ENCODE measurements at regions of chr4 and their contacts with region 1.

Region 1: DNA sequence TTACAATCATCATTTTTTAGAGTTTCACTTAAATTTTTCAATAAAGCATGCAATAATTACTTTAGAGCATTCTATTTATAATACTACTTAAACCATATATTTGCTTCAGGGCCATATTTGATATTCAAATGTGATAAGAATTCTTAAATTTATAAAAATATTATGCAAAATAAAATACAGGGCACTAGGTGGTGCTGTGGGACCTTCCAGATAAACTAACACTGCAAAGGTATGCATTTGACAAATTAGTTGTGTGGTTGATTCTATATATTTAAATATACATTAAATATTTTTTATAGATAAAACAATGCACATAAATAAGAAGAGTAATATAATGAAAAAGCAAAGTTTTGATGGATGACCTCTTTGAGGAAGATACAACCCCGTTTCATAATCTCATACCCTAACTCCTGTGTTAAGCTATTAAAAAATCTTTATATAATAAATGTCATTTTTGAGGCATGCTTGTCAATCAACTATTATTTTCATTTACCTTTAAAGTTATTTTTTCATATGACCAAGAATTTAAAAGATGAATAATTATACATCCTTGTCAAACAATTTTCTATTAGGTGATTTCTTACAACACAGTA is 128.4 kb downstream of the REELD1 start:
- DNase-seq: no peak
- ATAC-seq: no peak

Region 2: GRCh38 chr4:146095091-146095690 is 247.5 kb before region 1 on chr4:
- intact Hi-C with region 1: loop called (anchors 5 kb)
- DNase-seq: no peak
- ATAC-seq: no peak

Region 3: GRCh38 chr4:146243141-146243882 is 99.4 kb before region 1 on chr4:
- intact Hi-C with region 1: loop called (anchors 2 kb)
- DNase-seq: no peak
- ATAC-seq: no peak

Region 4: GRCh38 chr4:146379744-146380143 is 37.0 kb after region 1 on chr4:
- intact Hi-C with region 1: no loop called
- DNase-seq: no peak
- ATAC-seq: no peak

Region 5: DNA sequence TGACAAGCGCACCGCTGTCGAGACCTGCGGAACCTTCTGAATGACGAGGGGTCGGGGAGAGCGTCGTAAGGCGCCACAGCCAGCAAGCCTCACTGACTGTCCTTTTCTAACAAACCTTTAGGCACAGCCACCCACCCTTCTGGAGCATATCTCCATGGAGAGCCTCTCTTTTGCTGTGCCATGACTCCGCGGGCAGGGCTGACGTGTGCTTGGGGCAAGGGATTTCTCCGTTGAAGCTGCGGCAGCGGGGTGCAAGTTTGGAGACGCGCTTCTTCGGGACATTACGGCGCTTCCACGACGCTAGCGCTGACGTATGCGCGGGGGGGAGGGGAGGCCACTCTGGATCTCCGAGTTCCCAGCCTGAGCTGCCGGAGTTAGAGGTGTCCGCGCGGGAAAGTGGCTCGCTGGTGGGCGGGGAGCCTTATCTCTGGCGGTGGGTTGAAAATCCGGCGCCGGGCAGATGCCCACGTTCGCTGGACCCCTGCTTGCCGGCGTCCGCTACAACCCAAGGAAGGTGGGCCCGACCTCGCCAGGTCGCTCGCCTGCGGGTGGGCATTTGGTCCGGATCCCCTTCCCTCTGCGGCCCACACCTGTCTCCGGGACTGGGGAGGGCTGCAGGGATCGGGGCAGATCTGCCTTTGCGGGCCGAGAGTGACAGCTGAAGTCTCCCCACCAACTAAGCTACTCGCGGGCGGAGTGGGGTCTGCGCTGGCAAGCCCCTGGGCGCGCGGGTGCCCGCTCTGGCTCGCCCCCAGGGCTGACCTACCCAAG is 179.6 kb after region 1 on chr4:
- intact Hi-C with region 1: loop called (anchors 5 kb)
- DNase-seq: peak; percentile 95
- ATAC-seq: peak; percentile 98

Region 6: GRCh38 chr4:146638801-146639605 is 296.3 kb after region 1 on chr4 and contains the start of gene POU4F2:
- intact Hi-C with region 1: loop called (anchors 10 kb)
- DNase-seq: no peak
- ATAC-seq: no peak
- total RNA-seq, gene POU4F2: not detected

Region 7: GRCh38 chr4:146916479-146917076 is 573.9 kb after region 1 on chr4:
- intact Hi-C with region 1: loop called (anchors 5 kb)
- DNase-seq: no peak
- ATAC-seq: no peak

Region 8: DNA sequence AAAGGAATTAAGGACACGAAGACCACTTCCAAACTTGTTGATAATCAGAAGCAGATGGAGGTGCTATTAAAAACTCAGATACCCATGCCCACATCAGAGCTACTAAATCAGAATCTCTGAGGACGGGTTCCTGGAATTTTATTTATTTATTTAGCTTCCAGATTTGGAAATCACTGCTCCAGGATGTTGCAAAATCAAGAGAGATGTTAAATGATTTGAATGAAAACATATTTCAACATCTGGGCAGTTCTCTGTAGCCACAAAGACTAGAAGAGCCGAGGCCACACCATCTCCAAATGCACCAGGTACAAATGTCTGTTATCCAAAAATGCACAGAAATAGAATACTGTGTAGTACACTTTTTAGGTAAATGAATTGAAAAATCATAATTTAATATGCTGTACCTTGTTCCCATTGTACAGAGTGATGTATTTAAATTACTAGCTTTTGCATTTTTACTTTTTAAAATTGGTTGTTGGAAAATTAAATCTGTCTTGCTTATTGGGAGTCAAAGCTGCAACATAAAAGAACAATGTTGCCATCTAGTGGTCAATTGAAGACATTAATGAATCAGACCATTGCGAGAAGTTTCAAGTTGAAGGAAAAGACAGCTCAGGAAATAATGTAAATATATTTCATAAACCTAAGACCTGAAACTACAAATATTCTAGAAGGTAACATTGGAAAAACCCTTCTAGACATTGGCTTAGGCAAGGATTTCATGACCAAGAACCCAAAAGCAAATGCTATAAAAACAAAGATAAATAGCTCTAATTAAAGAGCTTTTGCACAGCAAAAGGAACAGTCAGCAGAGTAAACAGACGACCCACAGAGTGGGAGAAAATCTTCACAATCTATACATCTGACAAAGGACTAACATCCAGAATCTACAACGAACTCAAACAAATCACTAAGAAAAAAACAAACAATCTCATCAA is 754.2 kb after region 1 on chr4:
- intact Hi-C with region 1: loop called (anchors 5 kb)
- DNase-seq: no peak
- ATAC-seq: peak; percentile 26